ENCODE measurements at regions of chr1 and their contacts with region 1.

Region 1: GRCh38 chr1:151839457-151840405 is at the start of gene C2CD4D:
- DNase-seq: peak in 1 of 2 donors; percentile 6
- ATAC-seq: no peak
- H3K4me3 ChIP-seq: peak within 1 kb of the TSS in 3 of 4 donors; percentile 43 to 56 (median 43)
- H3K27ac ChIP-seq: no peak within 1 kb of the TSS
- H3K4me1 ChIP-seq: peaks cover 7 to 10% of the 10 kb centered on the region in 2 donors
- H3K27me3 ChIP-seq: peaks cover 21 to 30% (median 26%) of the 10 kb centered on the region in 3 donors
- CTCF ChIP-seq: no peak
- POLR2A ChIP-seq: no peak
- total RNA-seq, gene C2CD4D: not detected

Region 2: DNA sequence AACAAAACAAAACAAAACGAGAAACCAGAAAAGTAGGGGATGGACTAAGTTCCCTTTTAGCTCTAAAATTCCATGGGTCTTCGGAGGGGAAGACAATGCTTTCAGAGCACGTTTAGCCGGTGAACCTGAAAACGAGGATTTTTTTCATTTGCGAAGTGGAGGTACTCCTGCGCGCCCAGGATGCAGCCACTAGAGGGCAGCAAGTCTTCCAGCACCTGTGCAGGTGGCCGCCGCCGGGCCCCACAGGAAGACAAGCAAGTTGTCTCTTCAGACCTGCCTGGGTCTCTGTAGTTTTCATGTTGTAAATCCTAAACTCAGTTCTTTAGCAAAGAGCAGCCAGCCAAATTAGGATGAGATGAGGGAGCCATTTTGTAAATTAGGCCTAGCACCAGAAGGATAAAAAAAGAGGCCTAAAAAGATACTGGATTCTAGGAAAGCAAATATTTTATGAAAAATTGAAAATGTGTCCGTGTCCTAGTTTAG is 245.5 kb before region 1 on chr1:
- in situ Hi-C with region 1: loop called in 3 of 4 experiments (anchors 10 to 25 kb)
- intact Hi-C with region 1: loop called (anchors 1 kb)
- DNase-seq: peak; percentile 50 to 70
- ATAC-seq: peak; percentile 65 to 81
- H3K4me3 ChIP-seq: no peak overlapping the region
- H3K27ac ChIP-seq: no peak overlapping the region
- H3K4me1 ChIP-seq: peaks cover 0 to 7% of the 10 kb centered on the region in 2 donors
- H3K27me3 ChIP-seq: no peaks in the 10 kb centered on the region
- CTCF ChIP-seq: peak; percentile 82 to 96 (median 84)
- POLR2A ChIP-seq: no peak

Region 3: GRCh38 chr1:151720974-151721787 is 118.5 kb before region 1 on chr1 and contains the start of gene RIIAD1:
- in situ Hi-C with region 1: no loop called
- intact Hi-C with region 1: loop called (anchors 5 kb)
- DNase-seq: no peak
- ATAC-seq: peak; percentile 75 to 82
- H3K4me3 ChIP-seq: peak within 1 kb of the TSS; percentile 59 to 95 (median 62)
- H3K27ac ChIP-seq: peak within 1 kb of the TSS; percentile 77 to 87 (median 81)
- H3K4me1 ChIP-seq: peaks cover 8 to 20% of the 10 kb centered on the region in 2 donors
- H3K27me3 ChIP-seq: peaks cover 5 to 21% (median 15%) of the 10 kb centered on the region in 3 donors
- CTCF ChIP-seq: no peak
- POLR2A ChIP-seq: no peak
- total RNA-seq, gene RIIAD1: not detected

Region 4: DNA sequence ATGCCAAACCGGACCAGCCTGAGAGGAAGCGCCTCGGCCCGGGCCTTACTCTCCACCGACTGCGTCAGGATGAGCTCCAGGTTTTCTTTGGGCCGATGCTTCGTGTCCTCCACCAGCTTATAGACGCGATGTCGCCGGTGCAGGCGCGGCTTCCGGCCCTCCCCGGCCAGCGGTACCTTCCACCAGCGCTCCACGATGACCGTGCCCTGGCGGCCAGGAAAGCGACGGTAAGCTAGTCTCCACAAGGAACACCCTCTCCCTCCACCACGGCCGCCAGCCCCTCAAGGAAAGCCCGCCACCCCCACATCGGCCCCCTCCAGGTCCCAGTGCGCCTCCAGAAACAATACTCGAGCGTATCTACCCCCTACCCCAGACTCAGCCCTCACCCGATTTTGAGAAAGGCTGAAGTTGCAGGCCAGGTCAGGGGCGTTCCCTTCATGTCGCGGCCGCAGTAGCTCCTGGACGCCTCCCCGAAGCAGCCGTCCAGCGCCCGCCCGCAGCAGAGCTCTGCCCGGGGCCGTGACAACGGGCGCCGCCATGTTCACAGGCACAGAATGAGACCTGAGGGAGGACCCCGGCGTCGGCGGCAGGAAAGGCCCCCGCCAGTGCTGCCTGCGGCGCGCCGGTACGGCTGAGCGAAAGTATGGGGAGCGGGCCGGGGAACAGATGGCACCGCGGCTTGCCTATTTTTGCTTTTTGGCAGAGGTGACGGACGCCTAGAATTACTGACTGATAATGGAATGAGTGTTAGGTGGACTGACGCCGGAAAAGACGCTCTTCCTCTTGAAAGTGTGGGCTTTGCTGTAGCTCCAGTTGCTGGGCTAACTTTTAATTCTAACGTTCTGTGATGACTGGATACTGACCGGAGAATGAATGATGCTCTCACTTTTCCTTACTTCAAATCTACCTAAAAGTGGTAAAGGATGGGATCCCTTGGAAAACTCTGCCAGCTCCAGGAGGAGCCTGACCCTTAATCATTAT is 76.5 kb before region 1 on chr1 and contains the start of gene MRPL9:
- in situ Hi-C with region 1: loop called in 1 of 4 experiments (anchors 10 kb)
- intact Hi-C with region 1: loop called (anchors 1 kb)
- DNase-seq: peak; percentile 60 to 71
- ATAC-seq: peak; percentile 90 to 95
- H3K4me3 ChIP-seq: peak within 1 kb of the TSS; percentile 76 to 96 (median 90)
- H3K27ac ChIP-seq: peak within 1 kb of the TSS; percentile 88 to 94 (median 90)
- H3K4me1 ChIP-seq: peaks cover 10 to 13% of the 10 kb centered on the region in 2 donors
- H3K27me3 ChIP-seq: no peaks in the 10 kb centered on the region
- CTCF ChIP-seq: peak in 1 of 5 experiments; percentile 13
- POLR2A ChIP-seq: peak in 1 of 2 donors; percentile 8
- total RNA-seq, gene MRPL9: 61.4 to 74.7 (median 65.6) TPM

Region 5: DNA sequence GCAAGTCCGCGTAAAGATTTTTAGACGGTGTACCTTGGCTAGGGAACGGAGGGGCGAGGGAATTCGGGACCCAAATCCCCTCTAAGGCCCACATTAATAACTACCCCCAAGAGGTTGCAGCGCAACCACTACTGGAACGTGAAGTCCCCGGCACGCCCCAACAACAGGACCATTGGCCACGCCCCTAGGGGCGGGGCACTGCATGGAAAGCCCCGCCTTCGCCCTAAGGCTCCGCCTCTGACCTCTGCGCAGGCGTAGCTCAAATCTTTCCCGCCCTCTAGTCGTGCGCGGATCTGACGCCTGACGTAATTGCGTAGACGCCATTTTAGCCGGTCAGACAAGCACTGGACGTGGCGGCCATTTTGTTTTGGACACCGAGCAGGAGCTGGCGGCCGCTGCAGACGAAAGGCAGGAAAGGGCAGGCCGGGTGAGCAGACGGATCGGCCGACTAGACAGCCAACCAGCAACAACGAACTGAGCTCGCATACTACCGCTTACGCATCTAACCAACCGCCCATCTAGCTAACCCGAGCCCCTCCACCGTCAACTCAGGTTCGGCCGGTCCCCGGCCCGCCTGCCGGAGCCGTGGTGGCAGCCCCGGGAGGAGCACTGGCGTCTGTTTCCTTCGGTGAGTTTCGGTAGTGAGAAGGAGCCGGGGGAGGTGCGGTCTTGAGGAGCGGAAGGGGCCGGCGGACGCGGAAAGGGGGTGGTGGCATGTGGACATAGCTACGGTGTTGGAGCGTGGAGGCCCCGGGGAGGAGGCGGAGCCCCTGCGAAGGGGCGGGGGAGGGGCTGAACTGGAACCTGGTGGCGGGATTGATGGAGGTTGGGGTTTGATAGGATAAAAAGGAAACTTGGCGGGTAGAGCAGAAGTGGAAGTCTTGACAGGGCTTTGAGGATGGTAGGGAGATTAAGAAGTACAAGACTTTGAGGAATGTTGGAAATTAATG is 1794.3 kb after region 1 on chr1 and contains the start of gene CHTOP:
- in situ Hi-C with region 1: no loop called
- intact Hi-C with region 1: loop called (anchors 10 kb)
- DNase-seq: peak; percentile 98 to 99
- ATAC-seq: peak; percentile 77 to 88
- H3K4me3 ChIP-seq: peak within 1 kb of the TSS; percentile 68 to 99 (median 94)
- H3K27ac ChIP-seq: peak within 1 kb of the TSS; percentile 95 to 100 (median 100)
- H3K4me1 ChIP-seq: peaks cover 61 to 75% of the 10 kb centered on the region in 2 donors
- H3K27me3 ChIP-seq: no peaks in the 10 kb centered on the region
- CTCF ChIP-seq: peak in 1 of 5 experiments; percentile 24
- POLR2A ChIP-seq: peak; percentile 83 to 91
- total RNA-seq, gene CHTOP: 49.5 to 73.4 (median 59.1) TPM